Activated CD4-positive, alpha-beta T cell treated with anti-CD3 and anti-CD28 coated beads, Interleukin-2, amount 10 ng/mL, durations not matched to agents 7 days and 5 days (primary cell): ENCODE measurements at regions of chr2 and their contacts with region 1.

Region 1: GRCh38 chr2:20052861-20053281 is 1.4 kb upstream of the LAPTM4A start:
- DNase-seq: no peak
- H3K4me3 Mint-ChIP-seq: no peak overlapping the region
- H3K27ac Mint-ChIP-seq: no peak overlapping the region
- H3K4me1 Mint-ChIP-seq: peaks cover 23% of the 10 kb centered on the region
- H3K27me3 Mint-ChIP-seq: peaks cover 33% of the 10 kb centered on the region

Region 2: GRCh38 chr2:19955544-19956422 is 97.1 kb before region 1 on chr2:
- CTCF ChIA-PET with region 1: no interaction called
- POLR2A ChIA-PET with region 1: no interaction called
- DNase-seq: peak; percentile 70
- H3K4me3 Mint-ChIP-seq: no peak overlapping the region
- H3K27ac Mint-ChIP-seq: no peak overlapping the region
- H3K4me1 Mint-ChIP-seq: no peaks in the 10 kb centered on the region
- H3K27me3 Mint-ChIP-seq: no peaks in the 10 kb centered on the region

Region 3: DNA sequence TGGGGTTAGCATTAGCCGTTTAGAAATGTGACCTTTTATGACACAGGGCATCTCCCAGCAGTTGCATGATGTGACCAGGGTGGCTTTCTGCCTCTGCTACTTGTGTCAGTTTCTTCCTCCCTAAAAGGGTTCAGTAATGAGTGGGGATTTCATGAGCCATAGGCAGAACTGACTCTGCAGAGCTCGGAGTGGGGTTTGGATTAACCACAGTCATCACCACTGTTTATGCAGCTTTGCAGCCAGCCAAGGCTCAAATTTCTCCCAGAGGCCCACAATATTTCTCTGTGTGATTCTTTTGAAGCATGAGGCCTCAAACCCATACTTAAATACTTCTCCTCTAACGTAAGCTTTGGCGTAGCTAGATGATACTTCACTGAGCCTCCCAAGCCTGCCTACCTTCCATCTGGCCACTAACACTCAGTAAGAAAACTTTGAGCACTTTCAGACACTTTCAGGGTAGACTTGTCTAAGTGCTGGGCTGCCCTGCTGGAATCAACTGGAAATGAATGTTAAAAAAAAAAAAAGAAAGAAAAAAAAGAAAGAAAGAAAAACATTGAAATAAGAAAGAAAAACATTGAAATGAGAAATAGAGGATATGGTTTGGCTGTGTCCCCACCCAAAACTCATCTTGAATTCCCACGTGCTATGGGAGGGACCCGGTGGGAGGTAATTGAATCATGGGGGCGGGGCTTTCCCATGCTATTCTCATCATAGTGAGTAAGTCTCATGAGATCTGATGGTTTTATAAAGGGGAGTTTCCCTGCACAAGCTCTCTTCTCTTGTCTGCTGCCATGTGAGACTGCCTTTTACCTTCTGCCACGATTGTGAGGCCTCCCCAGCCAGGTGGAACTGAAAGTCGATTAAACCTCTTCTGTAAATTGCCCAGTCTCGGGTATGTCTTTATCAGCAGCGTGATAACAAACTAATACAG is 10.0 kb after region 1 on chr2:
- CTCF ChIA-PET with region 1: interaction called, 11 read pairs
- POLR2A ChIA-PET with region 1: no interaction called
- DNase-seq: no peak
- H3K4me3 Mint-ChIP-seq: no peak overlapping the region
- H3K27ac Mint-ChIP-seq: no peak overlapping the region
- H3K4me1 Mint-ChIP-seq: no peaks in the 10 kb centered on the region
- H3K27me3 Mint-ChIP-seq: peaks cover 22% of the 10 kb centered on the region